GM12878 (cell line): ENCODE measurements at regions of chr19 and their contacts with region 1.

Region 1: GRCh38 chr19:6048808-6049405 is 61.4 kb downstream of the RFX2 start:
- DNase-seq: peak; percentile 35
- ATAC-seq: peak; percentile 100
- H3K4me3 ChIP-seq: no peak overlapping the region
- H3K27ac ChIP-seq: no peak overlapping the region
- H3K4me1 ChIP-seq: no peaks in the 10 kb centered on the region; the same call in 1 of the 2 replicates
- H3K27me3 ChIP-seq: no peaks in the 10 kb centered on the region
- CTCF ChIP-seq: peak; percentile 78 to 92 (median 92)
- EP300 ChIP-seq: no peak
- POLR2A ChIP-seq: no peak
- RAD21 ChIP-seq: peak; percentile 97

Region 2: GRCh38 chr19:5987077-5987818 is 61.7 kb before region 1 on chr19:
- CTCF ChIA-PET with region 1: interaction called, 37 read pairs
- POLR2A ChIA-PET with region 1: no interaction called
- RAD21 ChIA-PET with region 1: interaction called, 16 read pairs
- SMC1A ChIA-PET with region 1: interaction called, 8 read pairs
- in situ Hi-C with region 1: no loop called
- intact Hi-C with region 1: loop called (anchors 1 kb)
- DNase-seq: peak; percentile 19
- ATAC-seq: peak; percentile 75
- H3K4me3 ChIP-seq: peak overlapping the region; percentile 40; the same call in 1 of the 2 replicates
- H3K27ac ChIP-seq: no peak overlapping the region
- H3K4me1 ChIP-seq: peaks cover 8% of the 10 kb centered on the region
- H3K27me3 ChIP-seq: no peaks in the 10 kb centered on the region
- CTCF ChIP-seq: peak; percentile 89 to 95 (median 95)
- EP300 ChIP-seq: no peak
- POLR2A ChIP-seq: no peak
- RAD21 ChIP-seq: peak; percentile 84

Region 3: GRCh38 chr19:6116749-6117430 is 68.0 kb after region 1 on chr19:
- CTCF ChIA-PET with region 1: interaction called, 194 read pairs
- POLR2A ChIA-PET with region 1: no interaction called
- RAD21 ChIA-PET with region 1: interaction called, 5 read pairs
- SMC1A ChIA-PET with region 1: interaction called, 6 read pairs
- in situ Hi-C with region 1: no loop called
- intact Hi-C with region 1: no loop called
- DNase-seq: no peak
- ATAC-seq: no peak
- H3K4me3 ChIP-seq: no peak overlapping the region
- H3K27ac ChIP-seq: no peak overlapping the region
- H3K4me1 ChIP-seq: peaks cover 10% of the 10 kb centered on the region; the same call in 1 of the 2 replicates
- H3K27me3 ChIP-seq: no peaks in the 10 kb centered on the region
- CTCF ChIP-seq: no peak
- EP300 ChIP-seq: no peak
- POLR2A ChIP-seq: no peak
- RAD21 ChIP-seq: no peak